ENCODE measurements at regions of chrX and their contacts with region 1.

Region 1: DNA sequence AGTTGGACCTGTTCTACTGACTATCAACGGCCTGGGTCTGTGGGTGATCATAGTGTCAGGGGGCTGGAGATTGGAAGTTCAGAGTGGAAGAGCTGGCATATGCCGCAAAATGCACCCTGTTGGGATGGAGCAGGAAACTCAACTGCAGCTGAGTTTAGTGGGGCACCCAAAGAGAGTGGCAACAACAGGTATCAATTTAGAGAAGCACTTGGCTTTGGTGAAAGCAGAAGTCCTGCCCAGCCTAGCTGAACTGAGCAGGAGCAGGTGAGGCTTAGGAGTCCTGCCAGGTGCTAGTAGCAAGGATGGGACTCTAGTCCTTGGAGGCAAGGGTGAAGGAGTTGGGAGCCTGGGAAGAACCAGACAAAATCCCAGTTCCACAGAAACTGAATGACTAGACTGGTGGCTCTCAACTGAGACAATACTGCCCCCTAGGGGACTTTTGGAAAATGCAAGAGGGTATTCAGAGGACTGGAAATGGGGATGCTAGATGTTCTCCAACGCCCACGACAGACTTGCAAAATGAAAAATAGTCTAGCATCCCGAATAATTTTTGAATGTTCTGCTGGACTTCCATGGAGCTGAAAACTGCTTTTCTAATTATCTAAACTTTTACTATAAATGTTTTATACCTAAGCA is 49.4 kb downstream of the RTL9 start:
- DNase-seq: no peak
- ATAC-seq: peak; percentile 79

Region 2: DNA sequence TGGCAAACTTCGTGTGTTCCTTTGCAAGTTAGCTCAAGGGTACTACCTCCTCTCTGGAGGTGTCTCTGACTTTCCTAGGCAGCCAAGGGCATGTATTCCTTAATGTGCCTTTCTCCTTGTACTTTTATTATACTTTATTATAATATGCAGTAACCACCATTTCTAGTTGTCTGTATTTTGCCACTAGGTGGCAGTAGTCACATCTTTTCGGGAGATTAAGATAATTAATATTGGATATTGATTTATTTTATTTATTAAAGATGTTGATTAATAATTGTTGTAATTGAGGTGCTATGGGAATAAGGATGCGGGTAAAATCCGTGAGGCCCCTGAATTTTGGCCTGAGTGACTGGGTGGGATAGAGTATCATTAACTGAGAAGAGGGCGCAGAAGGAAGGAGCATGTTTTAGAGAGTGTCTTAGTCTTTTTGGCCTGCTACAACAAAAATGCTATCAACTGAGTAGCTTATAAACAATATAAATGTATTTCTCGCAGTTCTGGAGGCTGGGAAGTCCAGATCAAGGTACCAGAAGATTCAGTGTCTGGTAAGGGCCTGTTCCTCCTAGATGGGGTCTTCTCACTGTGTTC is 251.8 kb before region 1 on chrX:
- intact Hi-C with region 1: loop called (anchors 5 kb)
- DNase-seq: no peak
- ATAC-seq: no peak

Region 3: DNA sequence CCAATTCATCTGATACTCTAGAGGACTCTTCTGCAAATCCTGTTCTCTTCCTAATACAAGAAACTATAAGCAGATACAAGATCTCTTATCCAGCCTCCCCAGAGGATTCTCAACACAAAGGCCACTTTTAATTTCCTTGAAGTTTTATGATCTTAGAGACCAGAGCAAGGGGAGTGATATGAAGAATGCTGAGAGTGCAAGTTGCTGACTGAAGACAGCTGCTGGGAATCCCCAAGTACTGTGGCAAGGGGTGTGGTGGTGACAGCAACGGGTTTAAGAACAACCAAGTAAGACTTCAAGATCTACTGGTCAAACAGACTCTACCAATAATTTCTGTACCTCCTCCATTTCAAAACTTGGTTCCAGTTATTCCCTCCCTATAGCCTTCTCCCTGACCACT is 97.1 kb before region 1 on chrX:
- intact Hi-C with region 1: no loop called
- DNase-seq: no peak
- ATAC-seq: no peak

Region 4: GRCh38 chrX:112164420-112164819 is 1756.4 kb after region 1 on chrX:
- intact Hi-C with region 1: no loop called
- DNase-seq: no peak
- ATAC-seq: no peak